Transverse colon (tissue), 4 donors: ENCODE measurements at regions of chr2 and their contacts with region 1.

Region 1: DNA sequence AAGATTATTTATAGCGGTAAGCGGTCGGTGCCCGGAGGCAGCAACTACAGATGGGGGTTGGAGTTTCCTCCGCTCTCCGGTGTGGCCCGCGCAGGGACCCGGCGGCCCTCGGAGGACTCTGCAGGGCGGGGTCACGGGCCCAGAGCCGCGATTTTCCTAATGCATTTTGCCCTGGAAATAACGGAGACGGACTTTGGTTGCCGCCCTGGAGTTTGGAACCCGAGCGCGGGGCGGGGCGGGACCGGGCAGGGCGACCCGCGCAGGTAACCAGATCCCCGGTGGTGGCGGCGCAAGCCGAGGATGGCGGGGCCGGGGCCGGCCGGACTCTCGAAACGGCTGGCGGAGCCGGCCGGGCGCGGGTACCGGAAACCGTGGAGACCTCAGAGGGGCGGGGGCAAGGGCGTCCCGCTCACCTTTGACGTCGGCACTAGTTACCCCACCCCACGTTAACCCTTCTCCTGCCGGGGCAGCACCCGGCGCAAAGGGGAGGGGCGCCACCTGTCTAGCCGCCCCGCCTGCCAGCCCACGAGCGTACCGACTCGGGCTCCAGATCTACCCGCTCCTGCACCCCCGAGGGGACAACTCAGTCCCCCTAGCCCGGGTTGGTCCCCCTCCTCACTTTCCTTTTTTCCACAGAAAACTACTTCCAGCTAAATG is 2.9 kb downstream of the CYP26B1 start:
- DNase-seq: no peak
- H3K4me3 ChIP-seq: peak overlapping the region in 3 of 4 donors; percentile 25 to 55 (median 38)
- H3K27ac ChIP-seq: peak overlapping the region; percentile 2 to 49 (median 26)
- H3K4me1 ChIP-seq: peaks cover 39 to 68% (median 59%) of the 10 kb centered on the region in 4 donors
- H3K27me3 ChIP-seq: peaks cover 70% of the 10 kb centered on the region
- CTCF ChIP-seq: no peak
- EP300 ChIP-seq: no peak
- POLR2A ChIP-seq: no peak

Region 2: DNA sequence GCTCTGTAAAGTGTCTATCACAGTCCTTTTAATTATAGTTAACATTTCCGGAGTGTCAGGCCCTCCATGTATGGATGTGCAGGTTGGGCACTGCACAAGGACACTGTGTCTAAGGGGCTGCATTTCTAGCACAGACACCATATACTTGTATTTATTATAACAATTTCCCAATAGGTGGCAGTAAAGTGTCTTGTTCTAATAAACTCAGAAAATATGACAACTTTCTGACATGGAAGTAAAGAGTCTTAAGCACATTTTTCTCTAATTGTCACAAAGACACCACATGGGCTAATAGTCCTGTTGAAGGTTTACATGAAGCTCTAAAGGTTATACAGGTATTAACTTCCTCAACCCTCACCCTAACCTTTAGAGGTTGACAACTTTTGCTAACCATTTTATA is 534.8 kb before region 1 on chr2:
- in situ Hi-C with region 1: no loop called
- intact Hi-C with region 1: loop called (anchors 5 kb)
- DNase-seq: no peak
- H3K4me3 ChIP-seq: no peak overlapping the region
- H3K27ac ChIP-seq: no peak overlapping the region
- H3K4me1 ChIP-seq: peaks cover 0 to 8% (median 4%) of the 10 kb centered on the region in 4 donors
- H3K27me3 ChIP-seq: no peaks in the 10 kb centered on the region
- CTCF ChIP-seq: peak in 2 of 5 experiments; percentile 13 to 48
- EP300 ChIP-seq: no peak
- POLR2A ChIP-seq: no peak